Caco-2 (cell line): ENCODE measurements at regions of chr11 and their contacts with region 1.

Region 1: DNA sequence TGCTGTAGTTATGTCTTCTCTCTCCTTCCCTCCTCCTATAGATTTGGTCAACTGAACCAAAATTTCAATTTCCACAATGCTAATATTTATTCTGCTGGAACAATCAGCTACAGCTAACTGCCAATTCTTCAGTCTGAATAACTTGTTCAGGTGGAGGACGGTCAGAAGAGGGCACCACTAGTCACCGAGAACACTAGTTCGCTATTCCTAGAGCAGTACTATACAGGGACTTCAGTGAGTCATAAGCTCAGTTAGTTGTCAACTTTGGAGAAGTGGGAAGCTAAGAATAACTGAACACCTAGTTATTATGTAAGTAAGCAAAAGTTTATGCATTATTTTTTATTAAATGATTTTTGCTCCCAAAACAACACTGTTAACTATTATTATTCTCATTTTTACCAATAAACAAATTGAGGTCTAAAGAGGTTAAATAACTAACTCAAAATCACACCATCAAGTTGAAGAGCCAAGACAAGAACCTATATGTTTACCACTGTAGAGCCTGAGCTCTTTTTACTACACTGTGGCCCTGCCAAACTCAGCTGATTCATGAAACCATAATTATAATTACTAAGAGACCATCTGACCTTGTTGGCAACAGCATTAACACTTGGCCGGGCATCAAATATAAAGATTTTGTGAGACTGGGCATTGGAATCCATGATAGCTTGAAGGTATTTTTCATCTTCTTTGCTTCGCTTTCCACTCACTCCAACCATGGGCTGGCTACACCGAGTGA is 59.0 kb downstream of the CEP57 start:
- DNase-seq: peak; percentile 75 to 81
- H3K4me3 ChIP-seq: no peak overlapping the region
- H3K4me3 Mint-ChIP-seq: no peak overlapping the region
- H3K27ac Mint-ChIP-seq: no peak overlapping the region
- H3K4me1 ChIP-seq: no peaks in the 10 kb centered on the region
- H3K4me1 Mint-ChIP-seq: no peaks in the 10 kb centered on the region
- H3K27me3 ChIP-seq: no peaks in the 10 kb centered on the region
- H3K27me3 Mint-ChIP-seq: no peaks in the 10 kb centered on the region
- CTCF ChIP-seq: peak; percentile 71 to 85

Region 2: DNA sequence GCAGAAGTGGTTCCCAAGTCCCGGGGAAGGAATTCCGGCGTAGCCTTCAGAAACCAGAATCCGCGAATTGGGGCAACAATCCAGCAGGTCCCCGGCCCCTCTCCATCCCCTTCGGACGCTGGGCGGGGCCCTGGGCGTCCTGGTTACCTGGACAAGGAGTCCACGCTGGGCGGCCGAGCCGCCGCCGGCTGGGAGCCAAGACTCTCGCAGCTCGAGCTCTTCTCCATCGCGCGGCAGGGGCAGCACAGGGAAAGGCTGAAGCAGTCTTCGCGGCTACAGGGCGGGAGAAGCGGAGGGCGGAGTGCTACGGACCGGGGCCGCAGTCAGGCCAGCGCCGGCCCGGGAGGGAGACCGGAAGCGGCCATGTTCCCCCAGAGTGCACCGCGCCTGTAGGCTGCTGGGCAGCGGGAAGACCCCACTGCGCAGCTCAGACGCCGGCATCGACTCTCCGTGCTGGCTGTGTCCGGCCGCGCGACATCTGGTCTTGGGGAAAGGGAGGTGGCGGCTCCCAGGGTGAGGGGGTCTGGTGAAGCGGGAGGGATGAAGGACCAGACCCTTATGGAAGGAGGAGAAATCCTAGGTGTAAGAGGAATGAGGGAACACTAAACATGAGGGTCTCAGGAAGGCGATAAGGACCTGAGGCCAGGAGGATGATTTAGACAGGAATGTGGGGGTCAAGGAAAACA is 74.6 kb after region 1 on chr11 and contains the start of gene MTMR2:
- CTCF ChIA-PET with region 1: interaction called, 21 read pairs
- POLR2A ChIA-PET with region 1: no interaction called
- intact Hi-C with region 1: loop called (anchors 1 kb)
- DNase-seq: peak; percentile 88 to 91
- H3K4me3 ChIP-seq: peak within 1 kb of the TSS; percentile 84
- H3K4me3 Mint-ChIP-seq: peak within 1 kb of the TSS; percentile 88
- H3K27ac Mint-ChIP-seq: peak within 1 kb of the TSS; percentile 96
- H3K4me1 ChIP-seq: peaks cover 6% of the 10 kb centered on the region
- H3K4me1 Mint-ChIP-seq: peaks cover 13% of the 10 kb centered on the region
- H3K27me3 ChIP-seq: no peaks in the 10 kb centered on the region
- H3K27me3 Mint-ChIP-seq: no peaks in the 10 kb centered on the region
- CTCF ChIP-seq: peak in 1 of 2 experiments; percentile 14
- total RNA-seq, gene MTMR2: 75.2 and 76.4 TPM in 2 replicates

Region 3: DNA sequence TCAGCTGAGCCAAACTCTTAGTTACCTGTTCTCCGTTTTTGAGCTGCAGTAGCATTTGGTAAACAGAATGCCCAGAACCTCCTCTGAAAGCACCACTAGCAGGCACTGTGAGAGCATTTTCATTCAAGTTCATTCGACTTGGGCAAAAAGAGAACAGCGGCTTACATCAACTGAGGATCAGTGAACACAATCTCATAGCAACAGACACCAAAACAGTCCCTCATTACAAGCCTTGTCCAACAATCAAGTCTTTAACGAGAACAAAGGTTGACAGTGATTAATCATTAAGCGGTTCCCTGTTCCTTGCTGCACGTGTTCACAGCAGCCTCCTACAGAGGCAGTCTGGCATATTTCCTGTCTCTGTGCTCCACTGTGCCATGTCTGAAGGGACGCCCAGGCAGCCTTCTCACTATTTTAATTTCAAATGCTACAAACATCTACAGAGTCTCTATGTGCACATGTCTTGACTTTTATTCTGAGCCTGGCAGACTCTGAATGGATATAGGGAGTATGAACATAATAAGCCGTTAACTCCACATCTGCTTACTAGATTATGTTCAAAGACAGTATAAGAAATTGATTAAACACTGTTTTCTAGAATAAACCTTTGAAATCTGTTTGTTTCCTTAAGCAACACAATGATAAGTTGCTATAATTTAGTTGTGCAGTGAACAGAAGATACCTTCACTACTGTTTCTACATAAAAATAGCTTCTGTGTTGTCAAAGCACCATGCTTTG is 163.0 kb after region 1 on chr11:
- CTCF ChIA-PET with region 1: interaction called, 4 read pairs
- POLR2A ChIA-PET with region 1: no interaction called
- intact Hi-C with region 1: loop called (anchors 5 kb)
- DNase-seq: peak; percentile 62 to 69
- H3K4me3 ChIP-seq: no peak overlapping the region
- H3K4me3 Mint-ChIP-seq: no peak overlapping the region
- H3K27ac Mint-ChIP-seq: no peak overlapping the region
- H3K4me1 ChIP-seq: peaks cover 32% of the 10 kb centered on the region
- H3K4me1 Mint-ChIP-seq: peaks cover 14% of the 10 kb centered on the region
- H3K27me3 ChIP-seq: no peaks in the 10 kb centered on the region
- H3K27me3 Mint-ChIP-seq: no peaks in the 10 kb centered on the region
- CTCF ChIP-seq: peak; percentile 38 to 70

Region 4: GRCh38 chr11:96237766-96238266 is 388.6 kb after region 1 on chr11:
- CTCF ChIA-PET with region 1: interaction called, 13 read pairs
- POLR2A ChIA-PET with region 1: no interaction called
- intact Hi-C with region 1: loop called (anchors 1 kb)
- DNase-seq: peak in 1 of 2 experiments; percentile 25
- H3K4me3 ChIP-seq: no peak overlapping the region
- H3K4me3 Mint-ChIP-seq: no peak overlapping the region
- H3K27ac Mint-ChIP-seq: no peak overlapping the region
- H3K4me1 ChIP-seq: peaks cover 42% of the 10 kb centered on the region
- H3K4me1 Mint-ChIP-seq: peaks cover 7% of the 10 kb centered on the region
- H3K27me3 ChIP-seq: no peaks in the 10 kb centered on the region
- H3K27me3 Mint-ChIP-seq: no peaks in the 10 kb centered on the region
- CTCF ChIP-seq: no peak